ENCODE measurements at regions of chr1 and their contacts with region 1.

Region 1: GRCh38 chr1:154607609-154608396 is at the start of gene ADAR:
- DNase-seq: peak; percentile 92
- H3K4me3 Mint-ChIP-seq: peak within 1 kb of the TSS; percentile 98
- H3K27ac Mint-ChIP-seq: peak within 1 kb of the TSS; percentile 98
- H3K4me1 Mint-ChIP-seq: peaks cover 65% of the 10 kb centered on the region
- H3K27me3 Mint-ChIP-seq: no peaks in the 10 kb centered on the region
- total RNA-seq, gene ADAR: 267 and 282 TPM in 2 replicates

Region 2: DNA sequence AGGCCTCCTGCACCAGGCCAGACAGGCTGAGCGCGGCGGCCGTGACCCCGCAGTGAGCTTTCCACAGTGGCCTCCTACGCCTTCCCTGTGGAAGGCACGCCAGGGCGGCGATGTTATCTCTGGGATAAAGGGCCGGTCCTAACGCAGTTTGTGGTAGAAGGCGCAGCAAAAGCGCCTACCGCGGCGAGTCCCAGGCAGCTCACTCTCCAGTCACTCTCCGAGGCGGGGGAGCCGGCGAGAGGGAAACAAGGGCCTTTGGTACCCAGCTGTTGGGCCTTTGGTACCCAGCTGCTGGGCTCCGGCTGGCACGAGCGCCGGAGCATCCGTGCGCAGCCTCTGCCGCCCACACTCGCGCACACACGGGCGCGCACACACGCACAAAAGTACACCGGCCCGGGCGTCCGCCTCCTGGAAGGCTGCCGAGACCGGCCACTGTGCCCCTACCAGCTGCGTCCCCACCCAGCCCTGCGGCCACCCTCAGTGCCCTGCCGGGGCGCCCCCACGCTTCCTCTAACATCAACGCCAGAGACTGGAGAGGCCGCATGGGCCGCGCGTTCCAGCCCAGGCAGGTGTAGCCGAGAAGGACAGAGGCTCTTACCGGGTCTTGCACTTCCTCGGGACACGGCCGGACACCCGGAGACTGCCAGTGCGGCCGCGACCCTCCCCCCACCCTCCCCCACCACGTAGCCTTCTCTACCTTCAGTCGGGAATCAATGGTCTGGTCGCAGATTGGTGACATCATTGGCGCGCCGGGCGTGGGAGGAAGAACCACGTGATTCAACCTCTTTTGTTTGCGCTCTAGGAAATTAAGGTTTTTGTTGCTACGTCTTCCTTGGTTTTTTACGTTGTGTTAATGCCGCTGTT is 19.7 kb after region 1 on chr1:
- intact Hi-C with region 1: loop called (anchors 1 kb)
- DNase-seq: peak; percentile 86
- H3K4me3 Mint-ChIP-seq: peak overlapping the region; percentile 99
- H3K27ac Mint-ChIP-seq: peak overlapping the region; percentile 98
- H3K4me1 Mint-ChIP-seq: peaks cover 37% of the 10 kb centered on the region
- H3K27me3 Mint-ChIP-seq: peaks cover 17% of the 10 kb centered on the region